ENCODE measurements at regions of chr1 and their contacts with region 1.

Region 1: GRCh38 chr1:162497723-162498500 is at the start of gene UHMK1:
- DNase-seq: peak; percentile 85 to 93
- H3K4me3 ChIP-seq: peak within 1 kb of the TSS; percentile 95 to 100
- H3K27ac ChIP-seq: peak within 1 kb of the TSS; percentile 89 to 94
- H3K4me1 ChIP-seq: no peaks in the 10 kb centered on the region
- H3K27me3 ChIP-seq: no peaks in the 10 kb centered on the region
- CTCF ChIP-seq: no peak
- POLR2A ChIP-seq: peak; percentile 54 to 56
- total RNA-seq, gene UHMK1: 9.2 to 58.8 (median 31.6) TPM

Region 2: DNA sequence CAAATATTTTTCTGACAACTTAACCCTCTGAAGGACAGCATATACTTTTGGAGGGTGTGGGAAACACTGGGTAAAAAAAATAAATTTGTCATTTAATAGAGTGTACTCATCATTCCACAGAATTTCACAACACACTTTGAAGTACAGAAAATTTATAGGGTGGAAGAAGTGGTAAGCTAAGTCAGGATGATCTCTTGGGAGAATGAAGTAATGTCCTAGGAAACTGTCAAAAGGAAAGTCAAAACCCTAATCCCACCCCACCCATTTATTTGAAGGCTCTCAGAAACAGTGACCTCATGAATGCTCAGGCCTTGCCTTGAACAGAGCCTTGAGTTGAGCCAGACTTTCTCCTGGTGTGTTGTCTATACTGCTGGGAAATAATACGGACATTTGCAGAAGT is 56.3 kb after region 1 on chr1:
- intact Hi-C with region 1: loop called (anchors 10 kb)
- DNase-seq: no peak
- H3K4me3 ChIP-seq: no peak overlapping the region
- H3K27ac ChIP-seq: peak overlapping the region in 1 of 2 donors; percentile 13
- H3K4me1 ChIP-seq: no peaks in the 10 kb centered on the region
- H3K27me3 ChIP-seq: no peaks in the 10 kb centered on the region
- CTCF ChIP-seq: no peak
- POLR2A ChIP-seq: no peak

Region 3: DNA sequence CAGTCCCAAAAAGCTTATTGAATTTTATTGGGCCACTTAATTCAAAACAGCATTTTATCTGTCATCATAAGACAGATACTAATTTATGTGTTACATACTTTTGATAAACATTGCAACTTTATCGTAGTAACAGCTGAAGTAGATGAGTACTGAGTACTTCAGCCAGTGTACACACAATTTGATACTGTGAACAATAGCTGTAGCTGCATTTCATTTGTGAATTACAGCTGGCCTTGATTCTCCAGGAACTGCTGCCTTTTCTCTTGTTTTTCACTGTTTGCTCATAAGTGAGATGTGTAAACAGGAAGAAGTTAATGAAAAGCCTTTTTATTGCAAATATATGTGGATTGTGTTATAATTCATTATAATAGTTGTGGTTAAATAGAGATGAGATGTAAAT is 73.8 kb after region 1 on chr1:
- intact Hi-C with region 1: no loop called
- DNase-seq: no peak
- H3K4me3 ChIP-seq: no peak overlapping the region
- H3K27ac ChIP-seq: no peak overlapping the region
- H3K4me1 ChIP-seq: no peaks in the 10 kb centered on the region
- H3K27me3 ChIP-seq: no peaks in the 10 kb centered on the region
- CTCF ChIP-seq: no peak
- POLR2A ChIP-seq: no peak

Region 4: GRCh38 chr1:162596514-162597170 is 98.7 kb after region 1 on chr1:
- intact Hi-C with region 1: no loop called
- DNase-seq: no peak
- H3K4me3 ChIP-seq: no peak overlapping the region
- H3K27ac ChIP-seq: no peak overlapping the region
- H3K4me1 ChIP-seq: no peaks in the 10 kb centered on the region
- H3K27me3 ChIP-seq: no peaks in the 10 kb centered on the region
- CTCF ChIP-seq: no peak
- POLR2A ChIP-seq: no peak

Region 5: DNA sequence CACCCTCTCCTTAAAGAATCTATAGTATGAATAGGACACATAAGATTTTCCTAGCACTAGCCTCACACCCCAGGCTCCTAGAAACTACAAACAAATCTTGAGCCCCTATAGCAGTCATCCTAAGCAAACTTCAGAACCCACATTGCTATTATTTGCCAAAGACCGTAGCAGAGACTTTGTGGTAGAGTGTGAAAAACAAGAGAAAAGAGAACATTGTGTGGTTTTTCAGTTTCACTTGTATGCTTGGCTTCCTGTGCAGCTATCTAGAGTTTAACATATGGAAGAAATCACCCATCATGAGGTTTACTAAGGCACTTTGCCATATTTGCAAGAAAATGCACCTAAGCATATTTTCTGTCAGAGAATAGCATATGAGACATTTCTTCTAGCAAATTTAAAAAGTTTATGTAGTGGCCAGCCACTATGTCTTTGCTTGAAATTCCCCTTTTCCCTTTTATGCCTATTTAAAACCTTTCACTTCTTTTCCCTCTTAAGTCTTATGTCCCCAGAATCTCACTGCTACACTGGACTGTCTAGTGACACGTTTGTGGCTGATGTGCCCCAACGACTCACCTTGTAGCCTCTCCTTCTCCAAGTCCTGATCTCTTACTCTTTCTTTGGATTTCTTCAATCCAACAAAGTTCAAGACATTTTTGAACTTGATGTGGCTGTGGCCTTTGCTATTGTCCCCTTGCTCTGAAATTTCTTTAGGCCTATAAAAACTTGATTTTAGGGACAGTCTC is 337.4 kb after region 1 on chr1:
- intact Hi-C with region 1: no loop called
- DNase-seq: no peak
- H3K4me3 ChIP-seq: no peak overlapping the region
- H3K27ac ChIP-seq: no peak overlapping the region
- H3K4me1 ChIP-seq: no peaks in the 10 kb centered on the region
- H3K27me3 ChIP-seq: no peaks in the 10 kb centered on the region
- CTCF ChIP-seq: no peak
- POLR2A ChIP-seq: no peak

Measured in uterus (tissue), 4 donors.